Transverse colon (tissue), 4 donors: ENCODE measurements at regions of chr11 and their contacts with region 1.

Region 1: DNA sequence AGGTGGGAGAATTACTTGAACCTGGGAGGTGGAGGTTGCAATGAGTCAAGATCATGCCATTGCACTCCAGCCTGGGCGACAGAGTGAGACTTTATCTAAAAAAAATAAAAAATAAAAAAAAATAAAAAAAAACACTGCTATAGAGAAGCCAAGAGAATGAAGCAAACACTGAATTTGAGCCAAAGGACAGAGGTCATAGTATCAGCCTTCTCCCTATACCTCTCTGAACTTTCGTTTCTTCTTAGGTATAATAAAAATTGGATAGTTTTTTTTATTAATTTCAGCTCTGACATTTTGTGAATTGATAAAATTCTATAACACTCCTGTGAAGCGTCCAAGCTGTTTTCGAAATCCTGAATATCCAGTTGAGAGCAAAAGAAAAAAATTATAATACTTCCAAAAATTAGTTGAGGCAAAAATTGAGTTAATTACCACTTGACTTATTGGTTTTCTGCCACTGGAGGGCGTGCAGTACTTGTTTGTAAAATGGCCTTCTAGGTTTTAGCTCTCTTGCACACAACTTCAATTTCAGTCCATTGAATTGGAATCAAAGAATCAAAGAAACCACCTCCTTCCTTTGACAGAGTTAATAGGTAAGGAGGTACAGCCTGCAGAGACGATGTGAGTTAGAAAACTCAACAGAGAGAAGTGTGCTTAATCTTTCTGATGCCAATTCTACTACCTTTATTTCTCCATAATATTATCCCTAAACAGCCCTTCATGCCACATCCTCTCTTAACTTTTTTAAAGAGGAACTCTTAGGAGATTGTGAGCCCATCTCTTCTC is 143.2 kb downstream of the BBOX1 start:
- DNase-seq: peak; percentile 56
- H3K4me3 ChIP-seq: no peak overlapping the region
- H3K27ac ChIP-seq: peak overlapping the region in 1 of 4 donors; percentile 26
- H3K4me1 ChIP-seq: peaks cover 0 to 41% (median 26%) of the 10 kb centered on the region in 4 donors
- H3K27me3 ChIP-seq: no peaks in the 10 kb centered on the region
- CTCF ChIP-seq: peak; percentile 65 to 83 (median 75)
- EP300 ChIP-seq: no peak
- POLR2A ChIP-seq: no peak

Region 2: GRCh38 chr11:26649884-26650283 is 534.0 kb before region 1 on chr11:
- in situ Hi-C with region 1: no loop called
- intact Hi-C with region 1: no loop called
- DNase-seq: peak; percentile 61
- H3K4me3 ChIP-seq: no peak overlapping the region
- H3K27ac ChIP-seq: no peak overlapping the region
- H3K4me1 ChIP-seq: no peaks in the 10 kb centered on the region
- H3K27me3 ChIP-seq: no peaks in the 10 kb centered on the region
- CTCF ChIP-seq: peak; percentile 51 to 67 (median 65)
- EP300 ChIP-seq: no peak
- POLR2A ChIP-seq: no peak

Region 3: DNA sequence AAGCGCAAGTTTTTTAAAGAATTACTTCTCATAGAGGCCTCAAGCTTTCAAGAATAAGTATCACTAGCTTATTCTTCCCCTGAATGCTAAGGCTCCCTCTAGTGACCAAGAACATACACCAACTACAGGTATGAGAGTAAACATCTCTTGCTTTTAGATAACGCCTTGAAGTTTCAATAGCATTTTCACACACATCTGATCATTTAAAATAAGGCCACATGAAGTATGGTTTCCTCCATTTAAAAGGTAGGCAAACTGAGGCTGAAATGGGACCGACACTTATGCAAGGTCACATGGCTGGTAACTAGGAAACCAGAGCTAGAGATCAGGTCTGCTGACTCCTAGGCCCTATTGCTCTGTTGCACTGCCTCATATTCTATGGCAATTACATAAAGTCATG is 112.6 kb after region 1 on chr11:
- in situ Hi-C with region 1: loop called in 3 of 4 experiments (anchors 5 to 10 kb)
- intact Hi-C with region 1: loop called (anchors 1 kb)
- DNase-seq: no peak
- H3K4me3 ChIP-seq: no peak overlapping the region
- H3K27ac ChIP-seq: peak overlapping the region in 1 of 4 donors; percentile 26
- H3K4me1 ChIP-seq: peaks cover 4 to 47% (median 26%) of the 10 kb centered on the region in 4 donors
- H3K27me3 ChIP-seq: no peaks in the 10 kb centered on the region
- CTCF ChIP-seq: peak; percentile 61 to 76 (median 71)
- EP300 ChIP-seq: no peak
- POLR2A ChIP-seq: no peak

Region 4: GRCh38 chr11:27485930-27486773 is 302.3 kb after region 1 on chr11:
- in situ Hi-C with region 1: loop called (anchors 5 to 10 kb)
- intact Hi-C with region 1: loop called (anchors 5 kb)
- DNase-seq: no peak
- H3K4me3 ChIP-seq: no peak overlapping the region
- H3K27ac ChIP-seq: no peak overlapping the region
- H3K4me1 ChIP-seq: no peaks in the 10 kb centered on the region
- H3K27me3 ChIP-seq: no peaks in the 10 kb centered on the region
- CTCF ChIP-seq: peak; percentile 89 to 96 (median 94)
- EP300 ChIP-seq: no peak
- POLR2A ChIP-seq: no peak